PC-9 (cell line): ENCODE measurements at regions of chr9 and their contacts with region 1.

Region 1: DNA sequence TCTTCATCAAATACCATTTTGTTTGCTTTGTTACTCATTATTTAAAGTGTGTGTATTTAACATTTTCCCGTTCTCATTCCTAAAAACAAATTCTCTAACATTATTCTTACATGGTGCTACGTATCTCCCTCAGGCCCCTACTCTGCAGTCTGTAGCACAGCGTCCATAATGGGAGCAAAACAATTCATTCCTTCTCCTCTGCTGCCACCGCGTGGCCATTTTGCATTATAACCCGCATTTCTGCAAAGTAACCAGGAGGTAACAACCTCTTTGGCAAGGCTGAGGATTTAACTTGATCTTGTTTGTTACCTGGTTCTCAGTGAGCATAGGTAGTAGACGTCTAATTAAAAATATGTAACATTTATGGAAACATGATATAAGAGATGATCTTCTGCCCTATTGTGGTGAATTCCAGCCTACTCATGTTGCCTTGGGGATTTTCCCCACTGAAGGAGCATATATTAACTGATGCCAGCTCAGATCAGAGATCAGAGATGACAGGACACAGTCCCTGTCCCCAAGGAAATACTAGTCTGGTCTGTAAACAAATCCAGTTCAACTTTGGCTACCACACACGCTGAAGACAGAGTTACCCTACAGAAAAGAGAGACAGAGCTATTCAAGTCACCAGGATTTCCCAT is 10.5 kb downstream of the OR1K1 start:
- DNase-seq: peak; percentile 49 to 67
- H3K4me3 ChIP-seq: no peak overlapping the region
- H3K27ac ChIP-seq: no peak overlapping the region
- H3K4me1 ChIP-seq: peaks cover 10% of the 10 kb centered on the region
- H3K27me3 ChIP-seq: no peaks in the 10 kb centered on the region
- CTCF ChIP-seq: peak; percentile 91

Region 2: GRCh38 chr9:121463026-121463807 is 1347.2 kb before region 1 on chr9:
- CTCF ChIA-PET with region 1: interaction called, 15 read pairs
- POLR2A ChIA-PET with region 1: no interaction called
- intact Hi-C with region 1: no loop called
- DNase-seq: peak in 1 of 2 experiments; percentile 31
- H3K4me3 ChIP-seq: no peak overlapping the region
- H3K27ac ChIP-seq: no peak overlapping the region
- H3K4me1 ChIP-seq: no peaks in the 10 kb centered on the region
- H3K27me3 ChIP-seq: peaks cover 68% of the 10 kb centered on the region
- CTCF ChIP-seq: peak; percentile 69

Region 3: GRCh38 chr9:122099271-122099869 is 711.1 kb before region 1 on chr9:
- CTCF ChIA-PET with region 1: no interaction called
- POLR2A ChIA-PET with region 1: no interaction called
- intact Hi-C with region 1: loop called (anchors 1 kb)
- DNase-seq: peak; percentile 47 to 73
- H3K4me3 ChIP-seq: no peak overlapping the region
- H3K27ac ChIP-seq: no peak overlapping the region
- H3K4me1 ChIP-seq: no peaks in the 10 kb centered on the region
- H3K27me3 ChIP-seq: peaks cover 21% of the 10 kb centered on the region; the same call in 1 of the 2 replicates
- CTCF ChIP-seq: peak; percentile 88

Region 4: DNA sequence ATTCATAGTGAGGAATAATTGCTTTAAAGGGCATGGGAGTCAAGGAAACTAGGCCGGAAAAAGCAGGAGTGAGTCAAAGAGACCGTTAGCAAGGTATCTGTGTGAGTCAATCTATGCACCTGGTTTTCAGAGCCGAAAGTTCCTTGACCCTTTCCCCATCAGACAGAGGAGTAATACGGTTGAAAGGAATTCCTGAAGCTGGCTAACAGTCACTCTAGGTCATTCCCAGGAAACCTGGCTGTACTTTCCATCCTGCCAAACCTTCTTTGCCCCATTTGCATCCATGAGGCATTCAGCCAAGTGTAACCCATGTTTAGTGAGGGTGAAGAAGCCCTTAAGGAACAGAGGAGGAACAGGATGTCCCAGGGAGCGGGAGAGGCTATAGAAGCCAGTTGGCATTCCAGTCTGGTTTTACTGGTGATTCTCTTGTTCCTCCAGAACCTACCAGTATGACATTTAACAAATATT is 561.9 kb before region 1 on chr9:
- CTCF ChIA-PET with region 1: no interaction called
- POLR2A ChIA-PET with region 1: interaction called, 20 read pairs
- intact Hi-C with region 1: no loop called
- DNase-seq: no peak
- H3K4me3 ChIP-seq: no peak overlapping the region
- H3K27ac ChIP-seq: no peak overlapping the region
- H3K4me1 ChIP-seq: no peaks in the 10 kb centered on the region
- H3K27me3 ChIP-seq: no peaks in the 10 kb centered on the region
- CTCF ChIP-seq: no peak

Region 5: DNA sequence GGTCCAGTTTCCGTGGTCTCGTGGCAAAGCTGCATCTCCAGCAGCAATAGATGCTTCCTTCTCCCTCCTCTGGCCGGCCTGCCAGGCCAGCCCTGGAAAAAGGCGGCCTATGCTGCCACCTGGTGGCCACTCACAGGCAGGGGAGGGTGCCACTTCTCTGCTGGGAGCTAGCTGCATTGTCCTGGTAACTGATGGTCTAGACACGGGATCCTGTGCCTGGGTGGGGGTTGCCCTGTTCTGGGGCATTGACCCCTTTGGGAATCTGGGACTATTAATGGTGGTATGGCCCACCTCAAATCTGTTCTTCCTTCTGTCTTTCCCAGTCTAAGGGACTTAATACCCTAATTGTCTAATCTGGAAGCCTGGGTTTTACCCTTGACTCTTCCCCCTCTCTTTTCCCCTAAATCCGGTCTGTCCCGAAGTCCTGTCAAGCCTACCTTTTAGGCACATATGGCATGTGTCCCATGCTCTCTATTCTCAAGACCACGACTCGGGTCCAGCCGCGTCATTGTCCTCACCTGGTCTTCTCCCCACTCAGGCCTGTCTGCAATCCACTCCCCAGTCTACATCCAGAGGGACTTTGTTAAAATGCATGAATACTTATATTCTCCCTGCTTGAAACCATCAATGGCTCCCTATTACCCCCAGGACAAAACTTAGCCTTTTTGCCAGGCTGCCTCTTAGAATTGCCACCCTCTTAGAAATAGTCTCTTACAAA is 459.6 kb before region 1 on chr9:
- CTCF ChIA-PET with region 1: no interaction called
- POLR2A ChIA-PET with region 1: no interaction called
- intact Hi-C with region 1: loop called (anchors 1 kb)
- DNase-seq: peak in 1 of 2 experiments; percentile 82
- H3K4me3 ChIP-seq: no peak overlapping the region
- H3K27ac ChIP-seq: no peak overlapping the region
- H3K4me1 ChIP-seq: no peaks in the 10 kb centered on the region
- H3K27me3 ChIP-seq: peaks cover 21% of the 10 kb centered on the region
- CTCF ChIP-seq: peak; percentile 93

Region 6: GRCh38 chr9:122464633-122465567 is 345.5 kb before region 1 on chr9:
- CTCF ChIA-PET with region 1: interaction called, 13 read pairs
- POLR2A ChIA-PET with region 1: no interaction called
- intact Hi-C with region 1: loop called (anchors 1 kb)
- DNase-seq: peak; percentile 50 to 74
- H3K4me3 ChIP-seq: peak overlapping the region; percentile 51; the same call in 1 of the 2 replicates
- H3K27ac ChIP-seq: no peak overlapping the region
- H3K4me1 ChIP-seq: no peaks in the 10 kb centered on the region
- H3K27me3 ChIP-seq: peaks cover 21% of the 10 kb centered on the region; the same call in 1 of the 2 replicates
- CTCF ChIP-seq: peak; percentile 89

Region 7: GRCh38 chr9:122498883-122499288 is 311.5 kb before region 1 on chr9:
- CTCF ChIA-PET with region 1: no interaction called
- POLR2A ChIA-PET with region 1: interaction called, 4 read pairs
- intact Hi-C with region 1: loop called (anchors 1 kb)
- DNase-seq: peak in 1 of 2 experiments; percentile 31
- H3K4me3 ChIP-seq: no peak overlapping the region
- H3K27ac ChIP-seq: no peak overlapping the region
- H3K4me1 ChIP-seq: no peaks in the 10 kb centered on the region
- H3K27me3 ChIP-seq: peaks cover 11% of the 10 kb centered on the region
- CTCF ChIP-seq: peak; percentile 76